ENCODE measurements at regions of chr6 and their contacts with region 1.

Region 1: DNA sequence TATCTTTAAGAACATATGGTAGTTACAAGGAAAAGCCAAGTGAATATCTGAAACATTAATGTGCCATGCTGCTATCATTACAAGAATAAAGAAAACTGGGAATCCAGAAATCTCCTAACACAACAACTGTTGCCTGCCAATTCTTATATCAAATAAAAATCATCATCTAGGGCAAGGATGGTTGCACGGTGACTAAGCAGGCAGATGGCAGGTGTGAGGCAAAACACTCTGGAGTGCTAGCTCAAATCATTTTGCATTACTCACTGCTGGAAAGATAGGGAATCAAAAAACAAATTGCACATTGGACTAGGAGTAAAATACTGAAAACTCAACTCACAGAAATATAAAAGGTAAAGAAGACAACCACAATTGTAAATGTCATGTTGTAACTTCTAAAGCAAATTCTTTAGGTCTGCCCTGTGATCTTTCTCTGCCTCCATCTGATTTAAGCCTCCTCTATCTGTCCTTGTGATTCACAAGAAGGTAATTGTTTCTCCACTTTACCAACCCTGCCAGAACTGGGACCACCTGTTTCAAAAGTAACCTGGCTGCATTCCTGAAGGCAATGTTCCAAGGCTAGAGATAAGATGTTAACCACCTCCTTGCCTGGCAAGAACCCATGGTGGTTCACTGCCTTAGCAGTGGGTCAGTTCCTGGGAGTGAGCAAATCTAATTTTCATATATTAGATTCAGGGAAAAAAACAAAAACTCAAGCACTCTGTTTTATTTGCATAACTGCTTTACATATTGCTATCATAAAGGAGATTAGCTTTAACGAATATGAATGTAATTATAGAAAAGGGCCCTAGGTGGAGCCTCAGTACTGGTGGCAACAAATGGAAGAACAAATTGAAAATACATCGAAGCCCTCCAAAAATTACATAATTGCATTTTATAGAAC is 33.1 kb upstream of the LCA5 start:
- DNase-seq: peak; percentile 93 to 94
- H3K4me3 ChIP-seq: peak overlapping the region; percentile 16; the same call in 1 of the 2 replicates
- H3K4me3 Mint-ChIP-seq: peak overlapping the region; percentile 46
- H3K27ac Mint-ChIP-seq: peak overlapping the region; percentile 88
- H3K4me1 ChIP-seq: peaks cover 69% of the 10 kb centered on the region
- H3K4me1 Mint-ChIP-seq: peaks cover 42% of the 10 kb centered on the region
- H3K27me3 ChIP-seq: no peaks in the 10 kb centered on the region
- H3K27me3 Mint-ChIP-seq: no peaks in the 10 kb centered on the region
- CTCF ChIP-seq: peak; percentile 42 to 75

Region 2: GRCh38 chr6:78844899-78845298 is 725.5 kb before region 1 on chr6:
- CTCF ChIA-PET with region 1: no interaction called
- POLR2A ChIA-PET with region 1: no interaction called
- intact Hi-C with region 1: no loop called
- DNase-seq: no peak
- H3K4me3 ChIP-seq: no peak overlapping the region
- H3K4me3 Mint-ChIP-seq: no peak overlapping the region
- H3K27ac Mint-ChIP-seq: no peak overlapping the region
- H3K4me1 ChIP-seq: no peaks in the 10 kb centered on the region
- H3K4me1 Mint-ChIP-seq: no peaks in the 10 kb centered on the region
- H3K27me3 ChIP-seq: no peaks in the 10 kb centered on the region
- H3K27me3 Mint-ChIP-seq: peaks cover 4% of the 10 kb centered on the region
- CTCF ChIP-seq: no peak

Region 3: DNA sequence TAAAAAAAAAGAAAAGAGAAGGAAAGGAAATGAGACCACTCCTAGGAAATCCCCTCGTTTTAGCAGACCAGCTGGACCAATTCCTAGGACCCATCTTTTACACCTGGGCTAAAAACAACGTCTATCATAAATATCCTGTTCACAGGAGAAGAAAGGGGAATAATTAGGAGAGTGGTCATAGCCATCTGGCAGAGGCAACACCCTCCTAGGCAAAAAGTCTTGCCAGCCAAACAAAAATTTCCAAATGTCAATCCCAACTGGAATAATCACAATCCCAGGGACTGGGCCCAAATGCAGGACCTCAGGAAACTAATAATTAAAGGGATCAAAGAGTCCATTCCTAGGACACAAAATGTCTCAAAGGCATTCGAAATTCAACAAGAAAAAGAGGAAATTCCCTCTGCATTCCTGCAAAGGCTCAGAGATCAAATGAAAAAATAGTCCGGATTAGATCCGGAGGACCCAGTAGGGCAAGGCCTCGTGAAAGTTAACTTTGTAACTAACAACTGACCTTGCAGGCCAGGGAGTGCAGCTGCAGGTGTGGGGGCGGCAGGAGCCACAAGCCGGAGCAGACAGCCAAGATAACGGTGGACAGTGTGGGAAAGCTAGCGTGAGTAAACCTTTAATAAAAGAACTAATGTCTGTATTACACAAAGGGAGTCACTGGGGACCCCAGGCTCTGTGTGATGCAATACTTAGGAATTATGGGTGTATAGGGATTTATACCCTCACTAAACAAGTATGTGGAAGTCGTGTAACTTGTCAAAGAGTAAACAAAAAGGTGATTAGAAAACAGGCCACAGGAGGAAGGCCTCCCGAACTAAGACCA is 44.9 kb before region 1 on chr6:
- CTCF ChIA-PET with region 1: no interaction called
- POLR2A ChIA-PET with region 1: no interaction called
- intact Hi-C with region 1: loop called (anchors 1 kb)
- DNase-seq: peak; percentile 87 to 93
- H3K4me3 ChIP-seq: peak overlapping the region; percentile 17
- H3K4me3 Mint-ChIP-seq: peak overlapping the region; percentile 68
- H3K27ac Mint-ChIP-seq: peak overlapping the region; percentile 84
- H3K4me1 ChIP-seq: peaks cover 52% of the 10 kb centered on the region
- H3K4me1 Mint-ChIP-seq: peaks cover 32% of the 10 kb centered on the region
- H3K27me3 ChIP-seq: no peaks in the 10 kb centered on the region
- H3K27me3 Mint-ChIP-seq: no peaks in the 10 kb centered on the region
- CTCF ChIP-seq: no peak

Region 4: GRCh38 chr6:79544939-79545450 is 25.4 kb before region 1 on chr6:
- CTCF ChIA-PET with region 1: interaction called, 9 read pairs
- POLR2A ChIA-PET with region 1: interaction called, 4 read pairs
- intact Hi-C with region 1: loop called (anchors 1 kb)
- DNase-seq: peak; percentile 90 to 93
- H3K4me3 ChIP-seq: no peak overlapping the region
- H3K4me3 Mint-ChIP-seq: peak overlapping the region; percentile 42
- H3K27ac Mint-ChIP-seq: peak overlapping the region; percentile 69
- H3K4me1 ChIP-seq: peaks cover 22% of the 10 kb centered on the region
- H3K4me1 Mint-ChIP-seq: peaks cover 14% of the 10 kb centered on the region
- H3K27me3 ChIP-seq: no peaks in the 10 kb centered on the region
- H3K27me3 Mint-ChIP-seq: no peaks in the 10 kb centered on the region
- CTCF ChIP-seq: peak; percentile 40 to 74

Region 5: DNA sequence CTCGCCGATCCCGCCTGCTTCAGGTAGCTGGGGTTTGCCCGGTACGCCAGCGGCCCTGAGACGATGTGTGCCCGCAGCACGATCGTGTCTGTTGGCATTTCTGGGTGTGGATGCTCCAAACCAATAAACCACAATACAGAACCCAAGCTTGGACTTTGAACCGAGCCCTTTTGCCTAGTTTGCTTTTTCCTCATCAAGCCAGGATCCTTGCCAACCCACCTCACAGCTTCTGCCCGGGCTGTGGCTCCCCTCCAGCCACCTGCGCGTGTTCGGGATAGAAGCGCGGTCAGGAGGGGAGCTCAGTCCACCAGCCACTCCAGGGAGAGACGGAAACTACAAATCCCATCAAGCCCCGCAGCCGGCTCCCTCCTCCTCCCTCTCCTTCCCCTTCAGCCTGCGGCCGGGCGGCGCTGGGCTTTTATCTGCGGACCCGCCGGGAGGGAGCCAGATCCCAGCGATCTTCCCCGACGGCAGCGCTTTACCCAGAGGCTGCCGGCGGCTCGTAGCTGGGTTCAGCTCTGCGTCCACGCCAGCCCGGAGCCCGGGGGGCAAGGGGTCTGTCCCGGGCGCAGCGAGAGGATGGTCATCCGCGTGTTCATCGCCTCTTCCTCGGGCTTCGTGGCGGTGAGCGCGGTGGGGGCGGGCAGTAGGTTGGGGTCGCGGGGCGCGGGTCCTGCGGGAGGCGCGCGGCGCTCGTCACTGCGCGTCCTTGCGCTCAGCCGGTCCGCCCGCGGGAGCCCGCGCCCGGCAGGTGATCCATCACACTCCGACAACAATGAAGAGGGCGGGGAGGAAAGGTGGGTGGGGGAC is 60.7 kb after region 1 on chr6 and contains the start of gene SH3BGRL2:
- CTCF ChIA-PET with region 1: no interaction called
- POLR2A ChIA-PET with region 1: interaction called, 3 read pairs
- intact Hi-C with region 1: loop called (anchors 1 kb)
- DNase-seq: peak; percentile 88 to 89
- H3K4me3 ChIP-seq: peak within 1 kb of the TSS; percentile 90
- H3K4me3 Mint-ChIP-seq: peak within 1 kb of the TSS; percentile 95
- H3K27ac Mint-ChIP-seq: peak within 1 kb of the TSS; percentile 94
- H3K4me1 ChIP-seq: peaks cover 32% of the 10 kb centered on the region
- H3K4me1 Mint-ChIP-seq: peaks cover 27% of the 10 kb centered on the region
- H3K27me3 ChIP-seq: no peaks in the 10 kb centered on the region
- H3K27me3 Mint-ChIP-seq: no peaks in the 10 kb centered on the region
- CTCF ChIP-seq: no peak
- total RNA-seq, gene SH3BGRL2: 102 and 106 TPM in 2 replicates

Region 6: GRCh38 chr6:79813854-79814709 is 243.7 kb after region 1 on chr6:
- CTCF ChIA-PET with region 1: no interaction called
- POLR2A ChIA-PET with region 1: no interaction called
- intact Hi-C with region 1: loop called (anchors 1 kb)
- DNase-seq: peak; percentile 70 to 78
- H3K4me3 ChIP-seq: no peak overlapping the region
- H3K4me3 Mint-ChIP-seq: no peak overlapping the region
- H3K27ac Mint-ChIP-seq: no peak overlapping the region
- H3K4me1 ChIP-seq: no peaks in the 10 kb centered on the region
- H3K4me1 Mint-ChIP-seq: no peaks in the 10 kb centered on the region
- H3K27me3 ChIP-seq: no peaks in the 10 kb centered on the region
- H3K27me3 Mint-ChIP-seq: no peaks in the 10 kb centered on the region
- CTCF ChIP-seq: peak; percentile 79 to 91